ENCODE measurements at regions of chr17 and their contacts with region 1.

Region 1: GRCh38 chr17:35373534-35373983 is at the start of gene SLFN11:
- DNase-seq: peak; percentile 79
- H3K4me3 Mint-ChIP-seq: peak within 1 kb of the TSS; percentile 93
- H3K27ac Mint-ChIP-seq: peak within 1 kb of the TSS; percentile 95
- H3K4me1 Mint-ChIP-seq: peaks cover 66% of the 10 kb centered on the region
- H3K27me3 Mint-ChIP-seq: no peaks in the 10 kb centered on the region
- total RNA-seq, gene SLFN11: 70.8 and 76.0 TPM in 2 replicates

Region 2: GRCh38 chr17:35345926-35346771 is 27.4 kb before region 1 on chr17:
- intact Hi-C with region 1: loop called (anchors 1 kb)
- DNase-seq: peak; percentile 26
- H3K4me3 Mint-ChIP-seq: peak overlapping the region; percentile 91
- H3K27ac Mint-ChIP-seq: peak overlapping the region; percentile 40
- H3K4me1 Mint-ChIP-seq: peaks cover 61% of the 10 kb centered on the region
- H3K27me3 Mint-ChIP-seq: peaks cover 9% of the 10 kb centered on the region

Region 3: DNA sequence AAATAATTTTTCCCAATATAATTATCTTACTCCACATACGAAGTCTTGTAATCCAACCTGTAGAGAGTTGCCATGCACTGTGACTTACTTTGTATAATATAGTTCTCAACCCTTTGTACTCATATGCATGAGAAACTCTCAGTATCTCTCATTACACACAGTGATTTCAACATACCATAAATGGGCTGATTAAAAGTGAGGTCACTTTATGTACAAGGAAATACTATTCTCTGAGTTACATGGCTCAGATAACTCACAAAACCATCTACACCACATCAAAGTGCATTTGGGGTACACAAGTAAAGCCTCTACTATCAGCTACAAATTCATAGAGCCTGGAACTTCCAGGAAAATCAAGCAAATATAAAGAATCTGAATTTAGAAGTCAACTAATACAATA is 30.8 kb after region 1 on chr17:
- intact Hi-C with region 1: no loop called
- DNase-seq: no peak
- H3K4me3 Mint-ChIP-seq: no peak overlapping the region
- H3K27ac Mint-ChIP-seq: no peak overlapping the region
- H3K4me1 Mint-ChIP-seq: no peaks in the 10 kb centered on the region
- H3K27me3 Mint-ChIP-seq: no peaks in the 10 kb centered on the region

Region 4: GRCh38 chr17:35432176-35433074 is 58.9 kb after region 1 on chr17 and contains the start of gene SLFN12:
- intact Hi-C with region 1: loop called (anchors 1 kb)
- DNase-seq: peak; percentile 36
- H3K4me3 Mint-ChIP-seq: peak within 1 kb of the TSS; percentile 86
- H3K27ac Mint-ChIP-seq: peak within 1 kb of the TSS; percentile 87
- H3K4me1 Mint-ChIP-seq: peaks cover 51% of the 10 kb centered on the region
- H3K27me3 Mint-ChIP-seq: no peaks in the 10 kb centered on the region
- total RNA-seq, gene SLFN12: 6.6 and 8.4 TPM in 2 replicates

Region 5: DNA sequence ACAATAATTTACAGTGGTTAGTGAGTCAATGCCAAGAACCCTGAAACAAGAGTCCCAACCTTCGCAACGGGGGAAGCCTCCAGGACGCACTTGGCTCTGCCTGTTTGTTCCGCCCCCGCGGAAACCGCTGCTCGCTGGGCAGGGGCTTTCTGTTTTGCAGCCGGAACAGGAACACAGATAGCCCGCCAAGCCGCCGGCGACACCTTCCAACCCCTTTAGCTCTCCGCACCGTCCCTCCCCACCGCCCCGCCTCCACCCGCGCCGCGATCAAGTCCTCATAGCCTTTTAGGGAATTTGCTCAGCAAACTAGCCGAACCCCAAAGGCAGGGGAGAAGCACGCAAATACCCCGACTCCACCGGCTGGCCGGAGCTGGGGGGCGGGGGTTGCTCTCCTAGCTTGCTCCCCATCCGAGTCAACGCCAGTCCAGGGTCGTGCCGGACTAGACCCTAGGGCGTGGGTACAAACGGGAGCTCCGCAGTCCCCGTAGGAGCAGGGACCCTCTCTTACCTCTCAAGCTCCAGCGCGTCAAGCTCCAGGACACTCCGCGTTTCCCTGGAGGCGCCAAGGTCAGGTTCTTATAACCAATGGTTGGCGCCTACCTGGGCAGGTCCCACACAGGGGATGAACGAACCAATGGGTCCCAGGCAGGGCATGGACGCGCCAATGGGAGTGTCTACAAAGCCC is 74.8 kb after region 1 on chr17 and contains the start of gene SLFN13:
- intact Hi-C with region 1: loop called (anchors 1 kb)
- DNase-seq: peak; percentile 84
- H3K4me3 Mint-ChIP-seq: peak within 1 kb of the TSS; percentile 67
- H3K27ac Mint-ChIP-seq: peak within 1 kb of the TSS; percentile 66
- H3K4me1 Mint-ChIP-seq: peaks cover 27% of the 10 kb centered on the region
- H3K27me3 Mint-ChIP-seq: no peaks in the 10 kb centered on the region
- total RNA-seq, gene SLFN13: 32.2 and 32.7 TPM in 2 replicates

Measured in activated T-helper 1 cell treated with anti-CD3 and anti-CD28 coated beads, Interleukin-12 subunit alpha, Interleukin-12 subunit beta, Interleukin-2, Interleukin-4 antibody, amounts not matched to agents 30 ng/mL and 10 ng/mL and 1 ng/mL, durations not matched to agents 14 hours and 24 hours and 36 hours (primary cell).